ENCODE measurements at regions of chrX and their contacts with region 1.

Region 1: GRCh38 chrX:19682712-19683331 is 167.5 kb upstream of the MAP3K15 start:
- DNase-seq: peak; percentile 88
- H3K4me3 Mint-ChIP-seq: peak overlapping the region; percentile 47
- H3K27ac Mint-ChIP-seq: peak overlapping the region; percentile 90
- H3K4me1 Mint-ChIP-seq: peaks cover 72% of the 10 kb centered on the region
- H3K27me3 Mint-ChIP-seq: no peaks in the 10 kb centered on the region

Region 2: GRCh38 chrX:19343535-19344408 is 339.1 kb before region 1 on chrX and contains the start of gene PDHA1:
- CTCF ChIA-PET with region 1: no interaction called
- intact Hi-C with region 1: no loop called
- DNase-seq: peak; percentile 94
- H3K4me3 Mint-ChIP-seq: peak within 1 kb of the TSS; percentile 83
- H3K27ac Mint-ChIP-seq: peak within 1 kb of the TSS; percentile 78
- H3K4me1 Mint-ChIP-seq: peaks cover 21% of the 10 kb centered on the region
- H3K27me3 Mint-ChIP-seq: no peaks in the 10 kb centered on the region
- total RNA-seq, gene PDHA1: 233 to 242 TPM

Region 3: GRCh38 chrX:19440713-19441112 is 242.1 kb before region 1 on chrX:
- CTCF ChIA-PET with region 1: no interaction called
- intact Hi-C with region 1: no loop called
- DNase-seq: no peak
- H3K4me3 Mint-ChIP-seq: no peak overlapping the region
- H3K27ac Mint-ChIP-seq: no peak overlapping the region
- H3K4me1 Mint-ChIP-seq: no peaks in the 10 kb centered on the region
- H3K27me3 Mint-ChIP-seq: no peaks in the 10 kb centered on the region

Region 4: GRCh38 chrX:19566359-19567222 is 116.2 kb before region 1 on chrX:
- CTCF ChIA-PET with region 1: no interaction called
- intact Hi-C with region 1: loop called (anchors 2 kb)
- DNase-seq: peak; percentile 53
- H3K4me3 Mint-ChIP-seq: peak overlapping the region; percentile 26
- H3K27ac Mint-ChIP-seq: peak overlapping the region; percentile 90
- H3K4me1 Mint-ChIP-seq: peaks cover 49% of the 10 kb centered on the region
- H3K27me3 Mint-ChIP-seq: no peaks in the 10 kb centered on the region

Region 5: GRCh38 chrX:19642241-19643109 is 40.3 kb before region 1 on chrX:
- CTCF ChIA-PET with region 1: no interaction called
- intact Hi-C with region 1: loop called (anchors 5 kb)
- DNase-seq: no peak
- H3K4me3 Mint-ChIP-seq: no peak overlapping the region
- H3K27ac Mint-ChIP-seq: no peak overlapping the region
- H3K4me1 Mint-ChIP-seq: peaks cover 23% of the 10 kb centered on the region
- H3K27me3 Mint-ChIP-seq: no peaks in the 10 kb centered on the region

Region 6: GRCh38 chrX:19772826-19773628 is 90.2 kb after region 1 on chrX:
- CTCF ChIA-PET with region 1: no interaction called
- intact Hi-C with region 1: no loop called
- DNase-seq: no peak
- H3K4me3 Mint-ChIP-seq: peak overlapping the region; percentile 56
- H3K27ac Mint-ChIP-seq: peak overlapping the region; percentile 92
- H3K4me1 Mint-ChIP-seq: peaks cover 77% of the 10 kb centered on the region
- H3K27me3 Mint-ChIP-seq: no peaks in the 10 kb centered on the region

Region 7: GRCh38 chrX:19799319-19800182 is 116.7 kb after region 1 on chrX:
- CTCF ChIA-PET with region 1: no interaction called
- intact Hi-C with region 1: loop called (anchors 2 kb)
- DNase-seq: peak; percentile 68
- H3K4me3 Mint-ChIP-seq: peak overlapping the region; percentile 88
- H3K27ac Mint-ChIP-seq: peak overlapping the region; percentile 99
- H3K4me1 Mint-ChIP-seq: peaks cover 65% of the 10 kb centered on the region
- H3K27me3 Mint-ChIP-seq: no peaks in the 10 kb centered on the region

Region 8: DNA sequence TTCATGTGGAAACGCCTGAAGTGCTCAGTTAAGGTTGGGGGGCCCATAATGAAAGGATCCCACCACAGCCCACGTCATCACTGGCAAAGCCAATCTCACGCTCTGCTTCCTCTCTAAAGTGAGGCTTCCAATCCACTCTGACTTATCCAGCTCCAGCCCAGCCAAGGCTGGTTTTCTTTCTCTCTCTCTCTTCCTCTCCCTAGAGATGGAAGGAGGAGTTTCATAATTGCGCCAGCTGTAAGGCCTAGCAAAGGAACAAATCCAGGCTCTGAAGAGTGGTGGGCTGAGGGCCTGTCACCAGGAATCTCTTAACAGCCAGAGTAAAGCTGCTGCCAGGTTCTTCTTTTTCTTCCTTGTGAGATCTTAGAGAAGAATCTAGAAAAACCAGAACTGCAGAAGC is 328.8 kb after region 1 on chrX:
- CTCF ChIA-PET with region 1: no interaction called
- intact Hi-C with region 1: no loop called
- DNase-seq: no peak
- H3K4me3 Mint-ChIP-seq: no peak overlapping the region
- H3K27ac Mint-ChIP-seq: no peak overlapping the region
- H3K4me1 Mint-ChIP-seq: peaks cover 3% of the 10 kb centered on the region
- H3K27me3 Mint-ChIP-seq: no peaks in the 10 kb centered on the region

Region 9: DNA sequence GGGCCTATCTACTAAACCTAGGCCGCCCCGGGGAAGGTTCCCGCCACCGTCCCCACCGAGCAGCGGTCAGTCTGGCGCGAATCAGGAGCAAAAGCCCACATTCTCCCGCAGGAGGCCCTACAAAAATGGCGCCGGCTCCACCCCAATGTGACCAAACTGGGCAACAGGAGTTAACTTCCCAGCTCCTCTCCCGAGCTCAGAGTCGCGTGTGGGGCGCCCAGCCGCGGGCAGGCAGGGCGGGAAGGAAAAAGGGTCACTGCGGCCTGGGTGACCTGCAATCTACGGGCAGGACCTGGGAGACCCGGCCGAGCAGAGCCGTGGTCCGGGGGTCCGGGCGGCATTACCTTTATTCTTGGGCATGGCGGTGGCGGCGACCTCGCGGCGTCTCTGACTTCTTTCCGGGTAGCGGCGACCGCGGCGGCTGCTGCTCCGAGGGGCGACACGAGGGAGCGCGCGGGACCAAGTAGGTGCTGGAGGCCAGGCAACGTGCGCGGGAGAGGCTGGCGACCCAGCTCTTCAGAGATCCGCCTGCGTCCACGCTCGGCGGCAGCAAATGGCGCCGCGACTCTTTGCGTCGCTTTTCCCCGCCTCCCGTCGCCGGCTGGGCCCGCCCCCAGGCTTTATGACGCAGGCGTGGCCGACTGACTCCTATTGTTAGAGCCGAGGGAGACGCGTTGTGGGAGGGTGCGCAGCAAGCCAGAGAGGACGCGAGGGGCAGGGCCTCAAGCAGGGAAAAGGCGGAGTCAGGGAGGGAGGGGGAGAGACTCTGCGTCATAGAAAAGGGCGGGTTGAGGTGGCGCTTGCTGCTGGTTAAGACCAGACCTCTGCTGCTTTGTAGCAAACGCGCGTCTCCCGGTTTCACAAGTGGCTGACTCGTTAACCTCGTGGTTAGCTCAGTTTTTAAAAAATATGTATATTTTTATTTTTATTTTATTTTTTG is 458.7 kb after region 1 on chrX and contains the start of gene EIF1AX:
- CTCF ChIA-PET with region 1: no interaction called
- intact Hi-C with region 1: loop called (anchors 2 kb)
- DNase-seq: peak; percentile 97
- H3K4me3 Mint-ChIP-seq: peak within 1 kb of the TSS; percentile 81
- H3K27ac Mint-ChIP-seq: peak within 1 kb of the TSS; percentile 80
- H3K4me1 Mint-ChIP-seq: peaks cover 38% of the 10 kb centered on the region
- H3K27me3 Mint-ChIP-seq: no peaks in the 10 kb centered on the region
- total RNA-seq, gene EIF1AX: 106 to 109 TPM

Measured in activated naive CD4-positive, alpha-beta T cell treated with anti-CD3 and anti-CD28 coated beads for 36 hours (primary cell).